ENCODE measurements at regions of chr2 and their contacts with region 1.

Region 1: GRCh38 chr2:200944467-200945394 is 18.7 kb downstream of the ORC2 start:
- DNase-seq: peak; percentile 95
- ATAC-seq: peak; percentile 86
- H3K4me3 ChIP-seq: peak overlapping the region in 1 of 2 experiments; percentile 43; a peak in 2 of 4 replicates
- H3K27ac ChIP-seq: peak overlapping the region; percentile 77
- H3K4me1 ChIP-seq: peaks cover 25 to 35% of the 10 kb centered on the region in 2 experiments
- H3K27me3 ChIP-seq: no peaks in the 10 kb centered on the region
- CTCF ChIP-seq: no peak
- POLR2A ChIP-seq: no peak
- RAD21 ChIP-seq: 0 out of 2 replicates have a peak, but pooled peaks have one; percentile 0

Region 2: DNA sequence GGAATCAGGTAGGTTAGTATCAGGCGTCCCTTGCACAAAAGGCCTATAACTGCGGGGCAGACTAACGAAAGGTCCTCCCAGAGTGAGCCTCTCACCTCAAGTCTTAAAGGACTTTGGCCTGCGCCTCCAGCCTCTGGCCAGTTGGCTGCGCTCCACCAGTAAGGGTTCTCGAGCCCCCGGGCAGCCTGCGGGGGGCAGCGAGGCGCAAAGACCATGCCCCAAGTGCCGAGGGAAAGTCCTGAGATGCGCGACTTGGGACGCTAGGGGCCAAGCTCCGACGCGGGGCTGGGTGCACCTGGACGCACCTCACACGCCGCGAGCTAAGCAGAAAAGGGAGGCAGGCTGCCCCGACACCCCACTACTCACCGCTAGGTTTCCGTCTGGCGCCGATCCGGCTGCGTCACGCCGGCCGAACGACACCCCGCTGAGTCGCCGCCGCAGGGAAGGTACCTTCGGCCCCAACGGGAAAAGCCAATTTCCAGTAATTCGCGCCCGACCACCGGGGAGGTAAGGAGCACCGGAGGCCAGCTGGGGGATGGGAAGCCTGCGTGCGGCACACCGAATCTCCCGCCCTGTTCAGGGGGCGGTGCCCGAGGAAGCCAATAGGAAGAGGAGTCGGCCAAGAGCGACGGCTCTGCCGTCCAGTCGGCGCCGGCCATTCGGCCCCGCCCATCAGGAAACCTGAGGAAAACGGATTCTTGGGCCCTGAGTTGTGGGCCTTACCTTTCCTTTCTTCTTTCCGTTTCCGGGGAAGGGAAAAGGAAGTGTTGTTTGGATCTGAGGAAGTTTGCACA is 18.6 kb after region 1 on chr2 and contains the start of gene ORC2:
- CTCF ChIA-PET with region 1: interaction called, 5 read pairs
- POLR2A ChIA-PET with region 1: interaction called, 12 read pairs
- RAD21 ChIA-PET with region 1: no interaction called
- intact Hi-C with region 1: no loop called
- DNase-seq: peak; percentile 94
- ATAC-seq: peak; percentile 93
- H3K4me3 ChIP-seq: peak within 1 kb of the TSS; percentile 56 to 79
- H3K27ac ChIP-seq: peak within 1 kb of the TSS; percentile 93
- H3K4me1 ChIP-seq: peaks cover 12 to 44% of the 10 kb centered on the region in 2 experiments
- H3K27me3 ChIP-seq: no peaks in the 10 kb centered on the region
- CTCF ChIP-seq: peak; percentile 62 to 84 (median 72)
- POLR2A ChIP-seq: peak; percentile 80
- RAD21 ChIP-seq: peak; percentile 47
- total RNA-seq, gene ORC2: 51.9 TPM

Region 3: GRCh38 chr2:201071479-201072200 is 126.9 kb after region 1 on chr2 and contains the starts of genes HYCC2 and NDUFB3:
- CTCF ChIA-PET with region 1: interaction called, 3 read pairs
- POLR2A ChIA-PET with region 1: no interaction called
- RAD21 ChIA-PET with region 1: interaction called in 1 of 2 experiments, 3 read pairs
- intact Hi-C with region 1: loop called (anchors 1 kb)
- DNase-seq: peak; percentile 92
- ATAC-seq: peak; percentile 94
- H3K4me3 ChIP-seq: peak within 1 kb of the TSS; percentile 77 to 93
- H3K27ac ChIP-seq: peak within 1 kb of the TSS; percentile 64
- H3K4me1 ChIP-seq: peaks cover 4 to 18% of the 10 kb centered on the region in 2 experiments; a peak in 3 of 4 replicates
- H3K27me3 ChIP-seq: no peaks in the 10 kb centered on the region
- CTCF ChIP-seq: 0 out of 6 replicates have a peak, but pooled peaks of 2 of the 3 experiments have one; percentile 10 to 11
- POLR2A ChIP-seq: peak; percentile 77
- RAD21 ChIP-seq: no peak
- total RNA-seq, gene HYCC2: 9.9 TPM
- total RNA-seq, gene NDUFB3: 94.6 TPM

Measured in HCT116 (cell line).